H1 (cell line): ENCODE measurements at regions of chr9 and their contacts with region 1.

Region 1: GRCh38 chr9:132498531-132499210 is 83.7 kb upstream of the BARHL1 start:
- DNase-seq: no peak
- H3K4me3 ChIP-seq: no peak overlapping the region
- H3K27ac ChIP-seq: no peak overlapping the region
- H3K4me1 ChIP-seq: peaks cover 0 to 3% (median 0%) of the 10 kb centered on the region in 4 experiments; a peak in 2 of 7 replicates
- H3K27me3 ChIP-seq: no peaks in the 10 kb centered on the region
- CTCF ChIP-seq: no peak
- EP300 ChIP-seq: no peak
- POLR2A ChIP-seq: no peak
- RAD21 ChIP-seq: no peak

Region 2: GRCh38 chr9:132546148-132547051 is 47.7 kb after region 1 on chr9:
- CTCF ChIA-PET with region 1: interaction called, 66 read pairs
- POLR2A ChIA-PET with region 1: no interaction called
- DNase-seq: peak; percentile 34 to 90
- H3K4me3 ChIP-seq: peak overlapping the region; percentile 8 to 55 (median 46); a peak in 7 of 8 replicates
- H3K27ac ChIP-seq: no peak overlapping the region
- H3K4me1 ChIP-seq: peaks cover 0 to 4% (median 4%) of the 10 kb centered on the region in 4 experiments; a peak in 4 of 7 replicates
- H3K27me3 ChIP-seq: no peaks in the 10 kb centered on the region; a peak in 1 of 7 replicates
- CTCF ChIP-seq: peak; percentile 65 to 78 (median 72)
- EP300 ChIP-seq: no peak
- POLR2A ChIP-seq: no peak
- RAD21 ChIP-seq: peak; percentile 30 to 49

Region 3: GRCh38 chr9:132575005-132575609 is 76.4 kb after region 1 on chr9:
- CTCF ChIA-PET with region 1: interaction called, 18 read pairs
- POLR2A ChIA-PET with region 1: no interaction called
- DNase-seq: peak in 1 of 2 experiments; percentile 90
- H3K4me3 ChIP-seq: no peak overlapping the region
- H3K27ac ChIP-seq: no peak overlapping the region
- H3K4me1 ChIP-seq: peaks cover 0 to 9% (median 7%) of the 10 kb centered on the region in 4 experiments; a peak in 5 of 7 replicates
- H3K27me3 ChIP-seq: peaks cover 29 to 50% (median 49%) of the 10 kb centered on the region in 4 experiments
- CTCF ChIP-seq: peak; percentile 89 to 98 (median 91)
- EP300 ChIP-seq: no peak
- POLR2A ChIP-seq: no peak
- RAD21 ChIP-seq: peak; percentile 99

Region 4: DNA sequence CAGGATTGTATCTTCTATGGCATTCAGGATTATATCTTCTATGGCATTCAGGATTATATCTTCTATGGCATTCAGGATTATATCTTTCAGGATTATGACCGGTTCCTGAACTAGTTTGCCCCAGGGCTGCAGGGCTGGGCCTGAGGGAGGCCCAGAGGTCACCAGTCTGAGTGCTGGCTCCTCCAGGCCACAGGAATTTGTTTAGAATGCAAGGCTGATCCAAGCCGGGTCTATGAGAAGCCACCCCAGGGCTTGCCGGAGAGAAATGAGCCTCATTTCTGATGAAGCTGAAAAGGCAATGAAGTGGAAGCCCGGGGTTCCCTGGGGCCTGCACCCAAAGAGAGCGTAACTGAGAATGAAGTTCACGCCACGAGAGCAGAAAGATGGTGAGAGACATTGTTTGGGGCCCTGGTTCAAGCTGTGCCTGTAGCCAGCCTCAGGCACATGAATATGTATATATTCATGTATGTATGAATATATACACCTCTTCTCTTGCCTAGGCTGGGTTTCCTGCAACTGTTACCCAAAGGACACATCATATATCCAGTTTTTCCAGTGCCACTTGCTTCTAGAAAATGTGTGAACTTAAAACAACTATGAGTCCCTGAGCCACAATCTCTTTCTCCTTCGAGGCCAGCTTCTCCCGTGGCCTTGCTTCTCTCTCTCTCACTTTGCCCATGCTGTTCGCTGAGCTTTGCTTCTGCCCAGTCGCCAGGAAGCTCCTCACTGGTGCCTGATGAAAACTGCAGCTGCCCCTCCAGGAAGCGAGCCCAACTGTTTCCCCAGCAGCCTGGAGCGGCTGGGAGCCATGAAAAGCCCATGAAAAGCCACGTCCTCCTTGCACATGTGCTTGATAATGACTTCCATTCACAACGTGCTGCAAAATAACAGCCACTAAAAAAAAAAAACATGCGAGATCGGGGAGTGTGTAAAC is 233.9 kb after region 1 on chr9:
- CTCF ChIA-PET with region 1: no interaction called
- POLR2A ChIA-PET with region 1: no interaction called
- DNase-seq: no peak
- H3K4me3 ChIP-seq: no peak overlapping the region
- H3K27ac ChIP-seq: no peak overlapping the region
- H3K4me1 ChIP-seq: no peaks in the 10 kb centered on the region; a peak in 1 of 7 replicates
- H3K27me3 ChIP-seq: no peaks in the 10 kb centered on the region; a peak in 1 of 7 replicates
- CTCF ChIP-seq: no peak
- EP300 ChIP-seq: no peak
- POLR2A ChIP-seq: no peak
- RAD21 ChIP-seq: no peak